ENCODE measurements at regions of chr5 and their contacts with region 1.

Region 1: GRCh38 chr5:138408023-138408422 is 30.8 kb upstream of the REEP2 start:
- DNase-seq: peak; percentile 71
- H3K4me3 Mint-ChIP-seq: peak overlapping the region; percentile 8
- H3K27ac Mint-ChIP-seq: peak overlapping the region; percentile 77
- H3K4me1 Mint-ChIP-seq: peaks cover 13% of the 10 kb centered on the region
- H3K27me3 Mint-ChIP-seq: no peaks in the 10 kb centered on the region

Region 2: DNA sequence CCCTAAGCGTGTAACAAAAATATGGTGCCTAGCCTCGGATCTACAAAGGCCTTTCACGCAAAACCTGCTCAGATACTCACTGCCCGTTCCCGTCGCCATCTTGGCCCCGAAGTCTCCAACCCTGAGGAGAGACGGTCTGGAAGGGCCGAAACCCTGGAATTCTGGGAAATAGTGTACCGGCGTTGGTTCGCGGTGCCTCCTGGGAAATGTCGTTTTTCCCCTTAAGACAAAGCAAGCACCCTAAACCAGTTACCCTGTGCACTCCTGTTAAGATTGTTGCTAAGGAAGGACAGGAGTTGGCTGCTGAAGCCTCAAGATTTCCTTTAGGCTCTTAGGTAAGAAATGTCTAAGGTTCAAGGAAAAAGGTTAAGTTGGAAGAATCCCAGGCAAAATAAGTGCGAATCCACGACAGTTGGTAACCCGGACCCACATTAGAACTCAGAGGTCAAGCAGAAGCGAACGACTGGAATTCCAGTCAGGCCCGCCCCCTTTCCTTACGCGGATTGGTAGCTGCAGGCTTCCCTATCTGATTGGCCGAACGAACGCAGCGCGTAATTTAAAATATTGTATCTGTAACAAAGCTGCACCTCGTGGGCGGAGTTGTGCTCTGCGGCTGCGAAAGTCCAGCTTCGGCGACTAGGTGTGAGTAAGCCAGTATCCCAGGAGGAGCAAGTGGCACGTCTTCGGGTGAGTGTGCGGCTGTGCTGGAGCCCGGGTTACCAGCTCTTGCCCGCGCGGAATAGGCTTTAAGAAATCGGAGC is 229.3 kb before region 1 on chr5 and contains the starts of genes BRD8 and KIF20A:
- CTCF ChIA-PET with region 1: interaction called, 8 read pairs
- POLR2A ChIA-PET with region 1: no interaction called
- intact Hi-C with region 1: loop called (anchors 1 kb)
- DNase-seq: peak; percentile 96
- H3K4me3 Mint-ChIP-seq: no peak within 1 kb of the TSS
- H3K27ac Mint-ChIP-seq: no peak within 1 kb of the TSS
- H3K4me1 Mint-ChIP-seq: peaks cover 17% of the 10 kb centered on the region
- H3K27me3 Mint-ChIP-seq: no peaks in the 10 kb centered on the region
- total RNA-seq, gene BRD8: 62.9 to 65.8 TPM
- total RNA-seq, gene KIF20A: 55.5 to 60.3 TPM

Region 3: DNA sequence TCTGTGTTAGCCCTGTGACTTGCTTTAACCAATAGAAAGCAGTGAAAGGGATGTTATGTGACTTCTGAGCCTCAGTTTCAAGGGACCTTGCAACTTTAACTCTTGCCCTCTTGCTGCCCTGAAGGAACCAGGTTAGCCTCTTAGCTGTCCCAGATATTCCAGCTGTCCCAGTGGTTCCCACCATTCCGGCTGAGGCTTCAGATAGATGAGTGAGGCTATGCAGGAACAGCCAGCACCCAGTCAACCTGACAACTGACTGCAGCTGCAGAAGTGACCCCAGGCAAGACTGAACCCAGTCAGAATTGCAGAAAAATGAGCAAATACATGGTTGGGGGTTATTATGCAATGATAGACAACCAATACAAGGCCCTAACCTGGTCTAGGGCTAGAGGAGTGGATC is 184.5 kb before region 1 on chr5:
- CTCF ChIA-PET with region 1: interaction called, 10 read pairs
- POLR2A ChIA-PET with region 1: no interaction called
- intact Hi-C with region 1: no loop called
- DNase-seq: no peak
- H3K4me3 Mint-ChIP-seq: no peak overlapping the region
- H3K27ac Mint-ChIP-seq: no peak overlapping the region
- H3K4me1 Mint-ChIP-seq: peaks cover 4% of the 10 kb centered on the region
- H3K27me3 Mint-ChIP-seq: peaks cover 8% of the 10 kb centered on the region

Region 4: DNA sequence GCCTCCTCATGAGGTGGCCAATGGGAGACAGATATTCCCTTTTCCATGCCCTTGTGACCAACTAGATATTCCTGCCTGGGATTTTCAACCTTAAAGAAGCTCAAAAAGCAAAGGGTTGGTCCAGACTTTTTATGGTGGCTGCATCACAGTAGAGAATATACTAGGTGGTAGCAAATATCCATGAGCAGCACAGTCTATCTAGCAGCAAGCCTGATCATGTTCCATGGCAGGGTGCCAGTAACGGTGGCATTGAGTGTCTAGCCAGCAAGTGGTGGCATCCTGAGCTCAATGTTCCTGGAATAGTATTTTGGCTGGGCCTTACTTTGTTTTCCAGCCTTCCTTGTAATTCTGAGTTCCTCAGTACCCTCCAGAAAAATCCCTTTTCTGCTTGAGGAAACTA is 102.2 kb before region 1 on chr5:
- CTCF ChIA-PET with region 1: no interaction called
- POLR2A ChIA-PET with region 1: no interaction called
- intact Hi-C with region 1: no loop called
- DNase-seq: no peak
- H3K4me3 Mint-ChIP-seq: no peak overlapping the region
- H3K27ac Mint-ChIP-seq: no peak overlapping the region
- H3K4me1 Mint-ChIP-seq: no peaks in the 10 kb centered on the region
- H3K27me3 Mint-ChIP-seq: no peaks in the 10 kb centered on the region

Region 5: GRCh38 chr5:138369706-138370105 is 38.3 kb before region 1 on chr5:
- CTCF ChIA-PET with region 1: no interaction called
- POLR2A ChIA-PET with region 1: no interaction called
- intact Hi-C with region 1: loop called (anchors 5 kb)
- DNase-seq: no peak
- H3K4me3 Mint-ChIP-seq: no peak overlapping the region
- H3K27ac Mint-ChIP-seq: no peak overlapping the region
- H3K4me1 Mint-ChIP-seq: peaks cover 45% of the 10 kb centered on the region
- H3K27me3 Mint-ChIP-seq: no peaks in the 10 kb centered on the region